Activated naive CD4-positive, alpha-beta T cell treated with anti-CD3 and anti-CD28 coated beads for 36 hours (primary cell): ENCODE measurements at regions of chr7 and their contacts with region 1.

Region 1: GRCh38 chr7:36115448-36116321 is 37.4 kb upstream of the EEPD1 start:
- DNase-seq: peak; percentile 96
- H3K4me3 Mint-ChIP-seq: no peak overlapping the region
- H3K27ac Mint-ChIP-seq: no peak overlapping the region
- H3K4me1 Mint-ChIP-seq: peaks cover 27% of the 10 kb centered on the region
- H3K27me3 Mint-ChIP-seq: peaks cover 8% of the 10 kb centered on the region

Region 2: GRCh38 chr7:36207451-36208291 is 92.0 kb after region 1 on chr7:
- CTCF ChIA-PET with region 1: no interaction called
- intact Hi-C with region 1: loop called (anchors 1 kb)
- DNase-seq: peak; percentile 32
- H3K4me3 Mint-ChIP-seq: no peak overlapping the region
- H3K27ac Mint-ChIP-seq: no peak overlapping the region
- H3K4me1 Mint-ChIP-seq: peaks cover 30% of the 10 kb centered on the region
- H3K27me3 Mint-ChIP-seq: no peaks in the 10 kb centered on the region

Region 3: GRCh38 chr7:37031571-37032257 is 916.0 kb after region 1 on chr7:
- CTCF ChIA-PET with region 1: no interaction called
- intact Hi-C with region 1: loop called (anchors 1 kb)
- DNase-seq: peak; percentile 79
- H3K4me3 Mint-ChIP-seq: no peak overlapping the region
- H3K27ac Mint-ChIP-seq: peak overlapping the region; percentile 50
- H3K4me1 Mint-ChIP-seq: peaks cover 60% of the 10 kb centered on the region
- H3K27me3 Mint-ChIP-seq: no peaks in the 10 kb centered on the region